ENCODE measurements at regions of chr12 and their contacts with region 1.

Region 1: GRCh38 chr12:105330283-105330930 is at the start of gene C12orf75:
- DNase-seq: peak; percentile 78 to 84
- ATAC-seq: peak; percentile 90 to 95
- H3K4me3 ChIP-seq: peak within 1 kb of the TSS; percentile 64
- H3K27ac ChIP-seq: peak within 1 kb of the TSS; percentile 79 to 93
- H3K4me1 ChIP-seq: peaks cover 54% of the 10 kb centered on the region
- CTCF ChIP-seq: no peak
- EP300 ChIP-seq: no peak
- POLR2A ChIP-seq: peak; percentile 46
- RAD21 ChIP-seq: no peak
- polyA plus RNA-seq, gene C12orf75: 238 and 298 TPM in 2 replicates

Region 2: DNA sequence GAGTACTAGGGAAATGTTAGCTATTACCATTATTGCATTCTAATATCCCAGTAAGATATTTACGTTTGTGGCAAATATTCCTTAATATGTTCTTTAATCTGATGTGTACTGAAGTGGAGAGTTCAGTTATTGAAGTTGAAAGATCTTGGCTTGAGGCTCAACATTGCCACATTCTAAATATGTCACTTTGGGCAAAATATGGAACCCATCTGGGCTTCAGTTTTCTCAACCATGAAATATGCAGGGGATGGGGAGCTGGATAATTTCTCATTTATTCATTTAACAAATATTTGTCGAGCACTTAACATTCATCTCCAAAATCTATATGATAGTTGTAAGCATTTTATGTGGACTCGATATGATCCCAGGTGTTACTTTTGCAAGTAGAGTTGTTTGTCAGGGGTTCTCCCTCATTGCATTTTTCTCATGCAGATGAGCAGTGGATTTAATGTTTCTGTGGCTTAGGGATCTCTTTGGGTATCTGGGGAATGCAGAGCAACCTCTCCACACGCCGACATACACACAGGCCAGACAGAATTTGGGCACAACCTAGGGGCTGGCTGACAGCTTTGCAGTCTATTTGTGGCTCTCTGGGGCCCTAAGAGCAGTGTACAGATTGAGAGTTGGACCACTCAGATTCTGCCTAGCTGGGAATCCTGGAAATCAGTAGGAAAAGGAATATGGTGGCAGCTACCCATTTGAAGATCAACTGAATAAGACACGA is 67.8 kb before region 1 on chr12:
- CTCF ChIA-PET with region 1: no interaction called
- POLR2A ChIA-PET with region 1: no interaction called
- DNase-seq: no peak
- ATAC-seq: no peak
- H3K4me3 ChIP-seq: no peak overlapping the region
- H3K27ac ChIP-seq: no peak overlapping the region
- H3K4me1 ChIP-seq: peaks cover 4% of the 10 kb centered on the region
- CTCF ChIP-seq: no peak
- EP300 ChIP-seq: no peak
- POLR2A ChIP-seq: no peak
- RAD21 ChIP-seq: no peak

Region 3: DNA sequence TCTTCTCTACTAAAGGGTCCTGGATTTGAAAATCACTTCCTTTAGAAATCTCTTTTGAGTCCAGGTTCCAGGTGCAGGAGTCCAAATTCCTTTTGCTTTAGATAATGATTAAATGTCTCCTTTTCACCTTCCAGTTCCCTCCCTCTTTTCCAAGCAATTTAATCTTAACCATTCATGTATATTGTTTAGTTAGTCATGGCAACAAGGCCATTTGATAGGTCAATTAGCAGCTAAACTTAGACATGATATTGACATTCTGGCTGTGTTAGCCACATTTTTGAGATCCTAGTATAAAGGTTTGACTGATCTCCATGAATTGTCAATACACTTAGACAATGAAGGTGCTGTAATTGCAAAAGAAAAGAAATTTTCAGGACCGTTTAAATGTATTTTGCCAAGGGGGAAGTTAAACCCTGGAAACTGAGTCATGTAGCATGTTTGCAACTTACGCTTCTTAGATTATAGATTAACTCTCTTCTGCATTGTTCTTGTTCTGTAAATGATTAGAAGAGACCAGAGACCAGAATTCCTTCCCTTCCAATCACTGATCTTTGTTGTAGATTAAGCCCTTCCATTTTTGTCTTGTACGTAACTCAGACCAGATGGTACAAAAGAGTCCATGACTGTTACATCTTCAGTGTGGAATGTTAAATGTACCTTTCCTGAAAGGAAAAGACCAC is 12.3 kb before region 1 on chr12:
- CTCF ChIA-PET with region 1: interaction called, 19 read pairs
- POLR2A ChIA-PET with region 1: no interaction called
- DNase-seq: peak in 1 of 2 experiments; percentile 91
- ATAC-seq: peak; percentile 65 to 86
- H3K4me3 ChIP-seq: no peak overlapping the region
- H3K27ac ChIP-seq: peak overlapping the region; percentile 85 to 88
- H3K4me1 ChIP-seq: peaks cover 50% of the 10 kb centered on the region
- CTCF ChIP-seq: no peak
- EP300 ChIP-seq: peak in 1 of 2 experiments; percentile 53; a peak in 1 of 5 replicates
- POLR2A ChIP-seq: no peak
- RAD21 ChIP-seq: no peak